ENCODE measurements at regions of chr16 and their contacts with region 1.

Region 1: GRCh38 chr16:69520800-69521602 is 44.8 kb upstream of the NFAT5 start:
- DNase-seq: peak; percentile 71
- ATAC-seq: peak; percentile 83
- H3K4me3 Mint-ChIP-seq: peak overlapping the region; percentile 7
- H3K27ac Mint-ChIP-seq: peak overlapping the region; percentile 85
- H3K4me1 Mint-ChIP-seq: peaks cover 26% of the 10 kb centered on the region
- H3K27me3 Mint-ChIP-seq: no peaks in the 10 kb centered on the region

Region 2: DNA sequence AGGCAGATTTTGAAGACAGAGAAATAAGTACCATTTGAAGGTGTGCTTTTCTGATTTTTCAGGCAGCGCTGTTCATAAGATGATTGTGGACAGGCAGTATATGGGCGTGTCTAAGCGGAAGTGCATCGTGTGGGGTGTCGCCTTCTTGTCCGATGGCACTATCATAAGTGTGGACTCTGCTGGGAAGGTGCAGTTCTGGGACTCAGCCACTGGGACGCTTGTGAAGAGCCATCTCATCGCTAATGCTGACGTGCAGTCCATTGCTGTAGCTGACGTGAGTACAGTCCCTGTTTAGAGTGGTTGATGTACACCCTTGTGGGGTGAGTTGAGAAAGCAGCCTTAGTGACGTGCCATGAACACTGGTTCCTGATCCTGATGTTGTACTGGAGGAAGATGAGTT is 377.9 kb before region 1 on chr16:
- CTCF ChIA-PET with region 1: no interaction called
- POLR2A ChIA-PET with region 1: no interaction called
- intact Hi-C with region 1: no loop called
- DNase-seq: no peak
- ATAC-seq: no peak
- H3K4me3 Mint-ChIP-seq: no peak overlapping the region
- H3K27ac Mint-ChIP-seq: no peak overlapping the region
- H3K4me1 Mint-ChIP-seq: peaks cover 2% of the 10 kb centered on the region
- H3K27me3 Mint-ChIP-seq: no peaks in the 10 kb centered on the region

Region 3: DNA sequence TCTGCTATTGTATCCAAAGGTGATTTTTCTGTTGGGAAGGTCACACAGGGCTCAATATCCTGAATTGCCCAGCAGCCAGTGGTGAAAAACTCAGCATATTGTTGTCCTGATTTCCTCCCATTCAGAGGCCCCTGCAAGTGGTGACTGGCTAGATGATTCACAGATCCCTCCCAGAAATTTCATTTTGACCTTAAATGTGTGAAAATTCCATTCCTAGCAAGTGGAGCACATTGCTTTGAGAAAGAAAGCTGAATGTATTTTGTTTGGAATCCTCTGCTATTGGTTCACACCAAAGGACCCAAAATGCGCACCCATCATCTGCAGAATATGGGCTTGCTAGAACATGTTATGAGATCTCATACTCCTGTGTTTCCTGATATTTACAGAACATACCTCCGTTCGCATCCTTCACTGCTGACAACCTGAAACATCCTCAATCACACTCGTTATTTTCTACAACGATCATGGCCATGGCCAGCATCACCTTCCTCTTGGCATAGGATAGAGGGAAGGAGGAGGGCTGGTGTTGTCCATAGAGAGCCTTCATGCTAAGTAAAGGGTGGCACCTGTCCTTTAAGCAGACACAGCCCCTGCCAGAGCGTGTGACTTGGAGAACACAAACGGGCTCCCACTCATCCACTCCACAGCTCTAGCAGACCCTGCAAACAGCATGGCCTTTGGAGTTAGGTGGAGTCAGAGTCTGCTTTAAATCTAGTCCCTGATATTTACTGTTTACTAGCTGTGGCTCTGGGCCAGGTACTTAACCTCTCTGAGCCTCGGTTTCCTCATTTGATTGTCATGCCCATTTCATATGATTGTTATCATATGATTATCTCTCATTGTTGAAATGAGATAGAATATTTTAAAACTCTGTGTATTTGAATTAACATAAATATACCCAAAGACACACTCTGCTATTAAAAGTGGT is 14.4 kb after region 1 on chr16:
- CTCF ChIA-PET with region 1: no interaction called
- POLR2A ChIA-PET with region 1: no interaction called
- intact Hi-C with region 1: loop called (anchors 1 kb)
- DNase-seq: no peak
- ATAC-seq: no peak
- H3K4me3 Mint-ChIP-seq: no peak overlapping the region
- H3K27ac Mint-ChIP-seq: no peak overlapping the region
- H3K4me1 Mint-ChIP-seq: peaks cover 21% of the 10 kb centered on the region
- H3K27me3 Mint-ChIP-seq: peaks cover 1% of the 10 kb centered on the region

Region 4: GRCh38 chr16:69669577-69669976 is 148.6 kb after region 1 on chr16:
- CTCF ChIA-PET with region 1: no interaction called
- POLR2A ChIA-PET with region 1: no interaction called
- intact Hi-C with region 1: no loop called
- DNase-seq: no peak
- ATAC-seq: no peak
- H3K4me3 Mint-ChIP-seq: no peak overlapping the region
- H3K27ac Mint-ChIP-seq: no peak overlapping the region
- H3K4me1 Mint-ChIP-seq: no peaks in the 10 kb centered on the region
- H3K27me3 Mint-ChIP-seq: no peaks in the 10 kb centered on the region

Measured in activated CD4-positive, alpha-beta T cell treated with anti-CD3 and anti-CD28 coated beads for 36 hours (primary cell).